MCF 10A (cell line): ENCODE measurements at regions of chr11 and their contacts with region 1.

Region 1: GRCh38 chr11:9015677-9016076 is 11.9 kb upstream of the NRIP3 start:
- DNase-seq: peak; percentile 79
- H3K4me3 Mint-ChIP-seq: no peak overlapping the region
- H3K27ac Mint-ChIP-seq: no peak overlapping the region
- H3K4me1 Mint-ChIP-seq: no peaks in the 10 kb centered on the region
- H3K27me3 Mint-ChIP-seq: no peaks in the 10 kb centered on the region
- CTCF ChIP-seq: peak; percentile 65

Region 2: DNA sequence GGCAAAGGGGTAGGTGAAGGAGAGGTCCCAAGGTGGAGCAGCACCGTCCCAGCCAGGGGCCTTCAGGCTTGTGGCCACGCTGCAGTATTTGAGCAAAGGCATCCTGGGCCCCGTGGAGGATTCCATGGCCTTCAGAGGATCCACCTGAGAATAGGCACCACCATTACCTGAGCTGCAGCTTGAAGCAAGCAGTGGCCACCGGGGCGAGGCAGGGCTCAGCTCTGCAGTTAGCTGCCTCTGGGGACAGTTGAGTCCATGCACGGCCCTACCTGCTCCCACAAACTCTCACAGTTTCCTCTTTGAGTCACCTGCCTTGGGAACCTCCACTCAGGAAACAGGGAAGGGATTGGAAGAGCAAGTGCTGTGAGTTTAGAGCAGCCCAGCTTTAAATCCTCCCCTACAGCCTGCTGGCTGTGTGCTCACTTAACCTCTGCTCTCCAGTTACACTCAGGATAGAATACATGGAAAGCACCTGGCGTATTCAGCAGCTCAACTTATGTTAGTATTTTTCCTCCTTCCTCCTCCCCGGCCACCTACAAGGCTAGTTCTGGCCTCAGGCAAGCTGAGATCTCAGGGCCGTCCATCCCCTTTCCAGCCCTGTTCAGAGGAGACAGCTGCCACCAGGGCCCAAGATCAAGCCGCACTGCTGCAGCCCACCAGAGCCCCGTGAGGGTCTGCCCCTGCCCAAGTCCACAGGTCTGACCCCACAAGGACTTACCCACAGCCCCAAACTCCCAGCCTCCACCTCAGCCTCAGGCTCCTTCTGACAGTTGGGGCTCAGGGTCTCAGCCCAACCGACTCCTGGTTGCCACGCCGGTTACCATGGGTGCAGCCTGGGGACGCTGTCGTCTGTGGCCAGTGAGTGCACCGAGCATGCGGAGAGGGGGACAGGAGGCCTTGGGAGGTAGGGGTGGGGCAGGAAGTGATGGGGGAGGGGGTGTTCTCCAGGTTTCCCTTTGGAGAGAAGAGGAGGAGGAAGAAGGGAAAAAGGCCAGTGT is 83.2 kb before region 1 on chr11 and contains the start of gene C11orf16:
- CTCF ChIA-PET with region 1: no interaction called
- POLR2A ChIA-PET with region 1: no interaction called
- intact Hi-C with region 1: no loop called
- DNase-seq: no peak
- H3K4me3 Mint-ChIP-seq: no peak within 1 kb of the TSS
- H3K27ac Mint-ChIP-seq: no peak within 1 kb of the TSS
- H3K4me1 Mint-ChIP-seq: peaks cover 14% of the 10 kb centered on the region
- H3K27me3 Mint-ChIP-seq: no peaks in the 10 kb centered on the region
- CTCF ChIP-seq: no peak
- total RNA-seq, gene C11orf16: not detected in 2 replicates

Region 3: DNA sequence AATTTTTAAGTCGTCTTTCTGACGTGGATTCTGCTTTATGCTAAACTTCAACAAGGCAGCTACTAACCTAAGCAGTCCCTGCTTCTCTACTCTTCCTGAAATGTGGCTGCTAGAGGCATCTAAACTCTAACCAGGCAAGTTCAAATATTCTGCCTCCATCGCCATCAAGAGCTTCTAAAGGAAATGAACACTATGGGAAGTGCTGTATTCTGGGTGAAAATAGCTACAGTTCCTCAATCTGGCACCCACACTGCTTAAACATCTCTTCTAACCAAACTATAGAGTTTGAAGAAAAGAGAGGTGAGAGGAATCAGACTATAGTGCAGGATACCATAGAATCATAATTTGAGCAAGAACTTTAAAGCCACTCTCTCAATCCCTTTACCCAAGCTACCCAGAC is 18.2 kb before region 1 on chr11:
- CTCF ChIA-PET with region 1: interaction called, 13 read pairs
- POLR2A ChIA-PET with region 1: interaction called, 5 read pairs
- intact Hi-C with region 1: no loop called
- DNase-seq: no peak
- H3K4me3 Mint-ChIP-seq: no peak overlapping the region
- H3K27ac Mint-ChIP-seq: no peak overlapping the region
- H3K4me1 Mint-ChIP-seq: peaks cover 7% of the 10 kb centered on the region
- H3K27me3 Mint-ChIP-seq: no peaks in the 10 kb centered on the region
- CTCF ChIP-seq: no peak

Region 4: GRCh38 chr11:9030601-9031000 is 14.9 kb after region 1 on chr11:
- CTCF ChIA-PET with region 1: interaction called, 58 read pairs
- POLR2A ChIA-PET with region 1: interaction called, 5 read pairs
- intact Hi-C with region 1: no loop called
- DNase-seq: no peak
- H3K4me3 Mint-ChIP-seq: no peak overlapping the region
- H3K27ac Mint-ChIP-seq: no peak overlapping the region
- H3K4me1 Mint-ChIP-seq: no peaks in the 10 kb centered on the region
- H3K27me3 Mint-ChIP-seq: no peaks in the 10 kb centered on the region
- CTCF ChIP-seq: no peak

Region 5: GRCh38 chr11:9069256-9069655 is 53.6 kb after region 1 on chr11:
- CTCF ChIA-PET with region 1: interaction called, 13 read pairs
- POLR2A ChIA-PET with region 1: no interaction called
- intact Hi-C with region 1: no loop called
- DNase-seq: no peak
- H3K4me3 Mint-ChIP-seq: no peak overlapping the region
- H3K27ac Mint-ChIP-seq: no peak overlapping the region
- H3K4me1 Mint-ChIP-seq: no peaks in the 10 kb centered on the region
- H3K27me3 Mint-ChIP-seq: no peaks in the 10 kb centered on the region
- CTCF ChIP-seq: no peak

Region 6: GRCh38 chr11:9120664-9121485 is 105.2 kb after region 1 on chr11:
- CTCF ChIA-PET with region 1: interaction called, 25 read pairs
- POLR2A ChIA-PET with region 1: no interaction called
- intact Hi-C with region 1: no loop called
- DNase-seq: no peak
- H3K4me3 Mint-ChIP-seq: no peak overlapping the region
- H3K27ac Mint-ChIP-seq: no peak overlapping the region
- H3K4me1 Mint-ChIP-seq: no peaks in the 10 kb centered on the region
- H3K27me3 Mint-ChIP-seq: no peaks in the 10 kb centered on the region
- CTCF ChIP-seq: no peak

Region 7: GRCh38 chr11:9137293-9138132 is 121.8 kb after region 1 on chr11:
- CTCF ChIA-PET with region 1: interaction called, 201 read pairs
- POLR2A ChIA-PET with region 1: interaction called, 12 read pairs
- intact Hi-C with region 1: loop called (anchors 1 kb)
- DNase-seq: peak; percentile 77
- H3K4me3 Mint-ChIP-seq: no peak overlapping the region
- H3K27ac Mint-ChIP-seq: peak overlapping the region; percentile 2
- H3K4me1 Mint-ChIP-seq: peaks cover 34% of the 10 kb centered on the region
- H3K27me3 Mint-ChIP-seq: no peaks in the 10 kb centered on the region
- CTCF ChIP-seq: peak; percentile 95

Region 8: GRCh38 chr11:9265211-9266131 is 249.8 kb after region 1 on chr11 and contains the start of gene DENND5A:
- CTCF ChIA-PET with region 1: interaction called, 4 read pairs
- POLR2A ChIA-PET with region 1: interaction called, 3 read pairs
- intact Hi-C with region 1: loop called (anchors 10 kb)
- DNase-seq: peak; percentile 79
- H3K4me3 Mint-ChIP-seq: peak within 1 kb of the TSS; percentile 84
- H3K27ac Mint-ChIP-seq: peak within 1 kb of the TSS; percentile 70
- H3K4me1 Mint-ChIP-seq: peaks cover 15% of the 10 kb centered on the region
- H3K27me3 Mint-ChIP-seq: no peaks in the 10 kb centered on the region
- CTCF ChIP-seq: no peak
- total RNA-seq, gene DENND5A: 55.4 and 61.1 TPM in 2 replicates